Uterus (tissue), 4 donors: ENCODE measurements at regions of chr4 and their contacts with region 1.

Region 1: DNA sequence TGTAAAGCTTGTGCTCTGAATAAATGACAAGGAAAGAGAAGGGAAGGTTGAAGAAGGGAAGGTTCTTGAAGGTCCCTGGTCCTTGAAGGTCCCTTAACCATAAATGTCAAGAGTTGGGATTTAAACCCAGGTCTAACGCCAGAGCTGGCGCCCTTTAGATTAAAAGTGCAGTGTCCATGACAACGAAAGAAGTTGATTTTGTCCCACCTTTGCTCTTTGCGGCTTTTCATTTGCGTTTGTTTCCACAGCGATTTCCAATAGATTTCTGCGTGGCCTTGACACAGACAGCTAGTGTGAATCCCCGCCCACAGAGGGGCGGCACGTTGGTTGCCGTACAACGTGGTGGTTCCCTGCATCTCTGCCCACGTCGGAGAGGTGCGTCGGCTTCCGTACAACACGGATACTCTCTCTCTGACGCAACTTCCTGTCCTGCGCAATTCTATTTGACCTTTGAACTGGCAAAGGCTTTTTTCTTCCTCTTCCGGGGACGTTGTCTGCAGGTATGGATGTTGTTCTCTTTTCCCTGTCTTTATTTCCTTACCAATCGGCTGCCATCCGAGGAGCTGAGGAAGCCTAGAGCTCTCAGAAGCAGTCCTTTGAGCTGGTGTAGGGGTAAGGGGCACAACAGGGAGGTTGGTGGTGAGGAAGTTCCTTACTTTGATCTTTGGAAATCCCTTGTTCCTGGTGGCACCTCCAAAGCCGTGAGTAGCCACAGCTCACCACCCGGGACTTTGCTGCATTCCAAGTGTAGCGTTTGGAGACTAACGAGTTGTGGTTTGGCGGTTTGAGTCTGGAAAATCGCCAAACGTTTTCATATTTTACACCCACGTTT is at the start of gene RPL34:
- DNase-seq: peak; percentile 96 to 98
- H3K4me3 ChIP-seq: peak within 1 kb of the TSS; percentile 57 to 76
- H3K27ac ChIP-seq: peak within 1 kb of the TSS; percentile 82 to 85
- H3K4me1 ChIP-seq: peaks cover 0 to 4% of the 10 kb centered on the region in 2 donors
- H3K27me3 ChIP-seq: no peaks in the 10 kb centered on the region
- CTCF ChIP-seq: no peak
- POLR2A ChIP-seq: peak; percentile 87 to 94
- total RNA-seq, gene RPL34: 1,071 to 6,726 (median 2,783) TPM

Region 2: DNA sequence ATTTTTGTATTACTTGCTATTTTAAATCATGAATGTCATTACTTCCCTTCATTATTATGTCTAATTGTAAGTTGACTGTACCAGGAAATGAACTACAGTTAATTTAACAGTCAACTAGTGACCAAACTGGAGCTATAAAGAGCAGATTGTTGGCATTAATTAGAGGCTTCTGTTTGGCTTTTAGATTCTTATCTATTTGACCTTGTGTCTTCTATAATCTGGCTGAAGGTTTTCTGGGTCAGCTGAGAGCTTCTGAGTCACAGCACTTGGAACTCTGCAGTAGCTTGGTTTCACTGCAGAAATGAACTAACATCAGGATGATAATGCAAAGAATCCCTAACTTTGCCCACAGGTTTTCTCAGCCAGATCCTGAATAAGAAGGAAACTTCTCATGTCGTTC is 282.4 kb before region 1 on chr4:
- intact Hi-C with region 1: no loop called
- DNase-seq: no peak
- H3K4me3 ChIP-seq: no peak overlapping the region
- H3K27ac ChIP-seq: no peak overlapping the region
- H3K4me1 ChIP-seq: no peaks in the 10 kb centered on the region
- H3K27me3 ChIP-seq: no peaks in the 10 kb centered on the region
- CTCF ChIP-seq: no peak
- POLR2A ChIP-seq: no peak

Region 3: GRCh38 chr4:108384544-108384943 is 235.8 kb before region 1 on chr4:
- intact Hi-C with region 1: no loop called
- DNase-seq: no peak
- H3K4me3 ChIP-seq: no peak overlapping the region
- H3K27ac ChIP-seq: no peak overlapping the region
- H3K4me1 ChIP-seq: no peaks in the 10 kb centered on the region
- H3K27me3 ChIP-seq: peaks cover 0 to 3% of the 10 kb centered on the region in 2 donors
- CTCF ChIP-seq: no peak
- POLR2A ChIP-seq: no peak

Region 4: GRCh38 chr4:108650212-108651013 is 30.1 kb after region 1 on chr4 and contains the start of gene OSTC:
- intact Hi-C with region 1: loop called (anchors 2 kb)
- DNase-seq: peak; percentile 93 to 97
- H3K4me3 ChIP-seq: peak within 1 kb of the TSS; percentile 89 to 92
- H3K27ac ChIP-seq: peak within 1 kb of the TSS; percentile 86 to 96
- H3K4me1 ChIP-seq: peaks cover 0 to 5% of the 10 kb centered on the region in 2 donors
- H3K27me3 ChIP-seq: no peaks in the 10 kb centered on the region
- CTCF ChIP-seq: peak in 2 of 4 experiments; percentile 6 to 33
- POLR2A ChIP-seq: peak; percentile 29 to 72
- total RNA-seq, gene OSTC: 61.2 to 916 (median 293) TPM

Region 5: GRCh38 chr4:108714863-108715581 is 94.7 kb after region 1 on chr4:
- intact Hi-C with region 1: no loop called
- DNase-seq: no peak
- H3K4me3 ChIP-seq: no peak overlapping the region
- H3K27ac ChIP-seq: no peak overlapping the region
- H3K4me1 ChIP-seq: no peaks in the 10 kb centered on the region
- H3K27me3 ChIP-seq: no peaks in the 10 kb centered on the region
- CTCF ChIP-seq: no peak
- POLR2A ChIP-seq: no peak